ENCODE measurements at regions of chr2 and their contacts with region 1.

Region 1: GRCh38 chr2:140178234-140178633 is 1398.0 kb upstream of the NXPH2 start:
- DNase-seq: no peak
- ATAC-seq: no peak
- H3K4me3 ChIP-seq: no peak overlapping the region
- H3K27ac ChIP-seq: no peak overlapping the region
- H3K4me1 ChIP-seq: no peaks in the 10 kb centered on the region
- H3K27me3 ChIP-seq: no peaks in the 10 kb centered on the region
- CTCF ChIP-seq: no peak

Region 2: DNA sequence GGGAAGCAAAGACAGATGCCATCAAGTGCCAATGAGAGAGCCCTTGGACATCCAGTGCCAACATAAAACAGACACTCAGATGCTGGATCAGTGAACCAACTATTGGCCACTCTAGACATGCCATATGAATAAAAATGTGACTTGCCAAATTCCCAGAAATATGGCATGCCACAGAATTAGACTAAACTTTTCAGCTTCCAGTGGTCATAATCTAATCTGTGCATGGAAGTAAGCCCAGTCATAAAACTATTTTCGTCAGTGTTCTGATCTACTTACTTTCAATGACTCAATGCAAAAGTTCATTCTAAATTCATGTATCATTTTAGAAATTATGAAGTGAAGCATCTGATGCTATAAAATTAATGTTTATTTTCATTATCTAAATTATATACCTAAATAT is 108.1 kb after region 1 on chr2:
- CTCF ChIA-PET with region 1: no interaction called
- POLR2A ChIA-PET with region 1: no interaction called
- in situ Hi-C with region 1: no loop called
- intact Hi-C with region 1: no loop called
- DNase-seq: no peak
- ATAC-seq: no peak
- H3K4me3 ChIP-seq: no peak overlapping the region
- H3K27ac ChIP-seq: no peak overlapping the region
- H3K4me1 ChIP-seq: no peaks in the 10 kb centered on the region
- H3K27me3 ChIP-seq: no peaks in the 10 kb centered on the region
- CTCF ChIP-seq: no peak

Region 3: DNA sequence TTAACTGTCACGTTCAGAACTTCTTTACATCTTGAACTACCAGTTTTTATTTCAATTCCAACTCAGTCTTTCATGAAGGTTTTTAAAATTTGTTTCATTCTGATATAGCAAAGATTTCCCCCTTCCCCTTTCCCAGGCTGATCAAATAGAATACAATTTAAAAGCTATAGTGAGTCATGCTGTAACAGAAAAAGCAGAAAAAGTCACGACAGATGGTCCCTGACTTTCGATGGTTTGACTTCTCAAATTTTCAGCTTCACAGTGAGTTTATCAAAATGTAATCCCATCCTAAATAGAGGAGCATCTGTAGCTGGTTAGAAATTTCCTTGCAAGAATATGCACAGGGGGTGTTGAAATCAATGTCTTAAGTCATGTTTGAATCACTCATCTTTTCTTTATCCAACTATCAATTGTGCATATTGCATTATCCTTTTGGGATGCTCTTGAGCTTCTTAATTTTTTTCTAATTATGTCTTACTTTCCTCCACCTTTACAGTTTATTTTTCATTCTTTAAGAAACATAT is 1452.2 kb after region 1 on chr2:
- CTCF ChIA-PET with region 1: no interaction called
- POLR2A ChIA-PET with region 1: interaction called, 11 read pairs
- in situ Hi-C with region 1: no loop called
- intact Hi-C with region 1: no loop called
- DNase-seq: no peak
- ATAC-seq: no peak
- H3K4me3 ChIP-seq: no peak overlapping the region
- H3K27ac ChIP-seq: no peak overlapping the region
- H3K4me1 ChIP-seq: no peaks in the 10 kb centered on the region
- H3K27me3 ChIP-seq: no peaks in the 10 kb centered on the region
- CTCF ChIP-seq: no peak

Measured in Panc1 (cell line).